Heart right ventricle (tissue), 16 donors: ENCODE measurements at regions of chr22 and their contacts with region 1.

Region 1: GRCh38 chr22:35840302-35840739 is 122.6 kb downstream of the APOL5 start:
- DNase-seq: peak; percentile 79 to 88
- ATAC-seq: peak; percentile 79 to 90 (median 86)
- H3K4me3 ChIP-seq: peak overlapping the region in 9 of 10 donors; percentile 28 to 59 (median 51)
- H3K27ac ChIP-seq: peak overlapping the region; percentile 35 to 88 (median 74)
- H3K4me1 ChIP-seq: peaks cover 10 to 82% (median 55%) of the 10 kb centered on the region in 9 donors
- H3K27me3 ChIP-seq: no peaks in the 10 kb centered on the region
- CTCF ChIP-seq: no peak

Region 2: GRCh38 chr22:35638410-35638809 is 201.9 kb before region 1 on chr22:
- intact Hi-C with region 1: loop called in 2 of 10 experiments (anchors 5 to 10 kb)
- DNase-seq: peak; percentile 93
- ATAC-seq: peak; percentile 94 to 98 (median 97)
- H3K4me3 ChIP-seq: peak overlapping the region in 3 of 10 donors; percentile 6 to 18 (median 17)
- H3K27ac ChIP-seq: peak overlapping the region; percentile 74 to 91 (median 85)
- H3K4me1 ChIP-seq: peaks cover 13 to 63% (median 35%) of the 10 kb centered on the region in 9 donors
- H3K27me3 ChIP-seq: no peaks in the 10 kb centered on the region
- CTCF ChIP-seq: no peak

Region 3: DNA sequence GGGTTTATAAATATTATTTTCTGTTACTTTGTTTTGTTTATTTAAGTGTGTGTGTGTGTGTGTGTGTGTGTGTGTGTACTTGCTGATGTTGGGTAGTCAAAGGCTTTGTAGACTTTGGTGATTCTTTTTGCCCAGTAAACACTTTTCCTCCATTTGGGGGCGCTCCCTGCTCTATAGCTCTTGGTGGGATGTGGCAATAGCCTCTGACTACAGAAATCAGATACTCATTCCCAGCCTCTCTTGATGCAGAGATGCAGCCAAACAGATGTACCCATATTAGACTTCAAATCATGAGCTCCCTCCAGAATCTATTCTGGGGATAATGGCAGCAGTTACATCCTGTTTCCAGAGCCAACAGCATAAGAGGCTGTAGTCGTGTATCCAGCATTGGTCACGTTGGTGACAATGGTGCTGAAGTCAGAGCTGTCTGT is 156.0 kb before region 1 on chr22:
- intact Hi-C with region 1: no loop called
- DNase-seq: peak in 1 of 2 donors; percentile 28
- ATAC-seq: peak; percentile 67 to 96 (median 90)
- H3K4me3 ChIP-seq: no peak overlapping the region
- H3K27ac ChIP-seq: peak overlapping the region in 3 of 10 donors; percentile 5 to 31 (median 26)
- H3K4me1 ChIP-seq: peaks cover 0 to 12% (median 0%) of the 10 kb centered on the region in 9 donors
- H3K27me3 ChIP-seq: no peaks in the 10 kb centered on the region
- CTCF ChIP-seq: peak in 8 of 9 donors; percentile 5 to 47 (median 26)

Region 4: GRCh38 chr22:35749808-35750207 is 90.5 kb before region 1 on chr22:
- intact Hi-C with region 1: loop called in 2 of 10 experiments (anchors 5 to 10 kb)
- DNase-seq: no peak
- ATAC-seq: no peak
- H3K4me3 ChIP-seq: no peak overlapping the region
- H3K27ac ChIP-seq: no peak overlapping the region
- H3K4me1 ChIP-seq: peaks cover 0 to 60% (median 42%) of the 10 kb centered on the region in 9 donors
- H3K27me3 ChIP-seq: no peaks in the 10 kb centered on the region
- CTCF ChIP-seq: no peak

Region 5: GRCh38 chr22:35785181-35785923 is 55.0 kb before region 1 on chr22:
- intact Hi-C with region 1: loop called in 2 of 10 experiments (anchors 5 to 10 kb)
- DNase-seq: no peak
- ATAC-seq: peak in 4 of 8 donors; percentile 11 to 67 (median 52)
- H3K4me3 ChIP-seq: no peak overlapping the region
- H3K27ac ChIP-seq: peak overlapping the region in 3 of 10 donors; percentile 0 to 9 (median 6)
- H3K4me1 ChIP-seq: peaks cover 0 to 61% (median 42%) of the 10 kb centered on the region in 9 donors
- H3K27me3 ChIP-seq: no peaks in the 10 kb centered on the region
- CTCF ChIP-seq: no peak

Region 6: DNA sequence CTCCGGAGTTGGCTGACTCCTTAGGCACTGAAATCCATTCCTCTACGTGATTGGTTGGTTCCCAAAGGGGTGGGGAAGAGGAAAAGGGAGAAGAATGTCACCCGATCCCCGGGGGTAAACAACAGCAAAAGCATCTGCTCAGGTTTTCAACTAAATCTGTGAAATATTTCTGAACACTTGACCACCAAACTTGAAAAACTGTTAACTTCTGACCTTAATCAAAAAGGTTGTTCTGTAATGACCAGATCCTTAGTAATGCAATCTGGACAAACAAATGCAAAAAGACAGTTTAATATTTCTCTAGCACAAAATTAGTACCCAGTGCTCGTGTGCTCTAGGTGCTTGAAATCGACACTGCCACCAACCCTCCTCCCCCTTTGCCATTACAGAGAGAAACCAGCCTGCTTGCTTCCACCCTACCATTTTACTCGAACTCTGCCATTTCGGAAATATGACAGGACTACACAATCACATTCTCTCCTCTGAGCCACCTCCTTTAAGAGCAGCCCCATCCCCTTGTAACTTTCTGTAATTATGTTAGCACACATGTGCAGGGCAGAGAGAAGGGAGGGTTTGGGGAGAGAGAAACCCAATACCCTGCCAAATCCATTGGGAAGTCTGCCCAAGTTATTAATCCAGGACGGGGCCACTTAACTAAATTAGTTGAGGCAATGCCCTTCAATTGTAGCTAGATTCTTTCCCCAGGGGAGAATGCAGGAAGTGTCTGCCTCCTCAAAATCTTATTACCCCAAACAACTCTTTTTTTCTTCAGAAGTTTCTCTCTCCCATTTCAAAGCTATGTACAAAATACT is 74.5 kb after region 1 on chr22:
- intact Hi-C with region 1: loop called in 7 of 10 experiments (anchors 2 to 10 kb)
- DNase-seq: peak in 1 of 2 donors; percentile 87
- ATAC-seq: peak; percentile 86 to 94 (median 92)
- H3K4me3 ChIP-seq: peak overlapping the region; percentile 12 to 55 (median 48)
- H3K27ac ChIP-seq: peak overlapping the region; percentile 75 to 93 (median 86)
- H3K4me1 ChIP-seq: peaks cover 9 to 99% (median 85%) of the 10 kb centered on the region in 9 donors
- H3K27me3 ChIP-seq: no peaks in the 10 kb centered on the region
- CTCF ChIP-seq: no peak

Region 7: GRCh38 chr22:35950262-35950661 is 109.9 kb after region 1 on chr22:
- intact Hi-C with region 1: no loop called
- DNase-seq: no peak
- ATAC-seq: no peak
- H3K4me3 ChIP-seq: no peak overlapping the region
- H3K27ac ChIP-seq: no peak overlapping the region
- H3K4me1 ChIP-seq: peaks cover 0 to 36% (median 9%) of the 10 kb centered on the region in 9 donors
- H3K27me3 ChIP-seq: no peaks in the 10 kb centered on the region
- CTCF ChIP-seq: no peak